Breast epithelium (tissue), 4 donors: ENCODE measurements at regions of chr3 and their contacts with region 1.

Region 1: DNA sequence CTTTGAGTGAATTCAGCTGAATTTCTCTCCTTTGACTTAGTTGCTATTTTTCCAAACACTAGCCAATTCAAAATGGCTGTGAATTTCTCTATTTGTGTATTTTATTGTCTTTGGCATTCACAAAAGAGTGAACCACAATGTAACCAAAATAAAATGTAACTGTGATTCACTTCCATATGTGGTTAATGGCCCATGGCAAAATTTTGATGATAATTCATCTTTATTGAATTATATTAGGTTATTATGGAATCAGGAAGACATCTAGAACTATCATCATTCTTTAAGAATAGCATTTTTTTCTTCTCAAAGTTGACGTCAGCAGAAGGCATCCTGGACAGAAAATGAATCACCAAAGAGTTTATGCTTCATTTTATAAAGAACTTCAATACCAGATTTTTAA is 705.3 kb upstream of the NAALADL2 start:
- DNase-seq: no peak
- H3K4me3 ChIP-seq: no peak overlapping the region
- H3K27ac ChIP-seq: no peak overlapping the region
- H3K4me1 ChIP-seq: no peaks in the 10 kb centered on the region
- H3K27me3 ChIP-seq: no peaks in the 10 kb centered on the region
- CTCF ChIP-seq: no peak
- POLR2A ChIP-seq: no peak

Region 2: GRCh38 chr3:173630849-173631248 is 523.0 kb before region 1 on chr3:
- intact Hi-C with region 1: loop called (anchors 5 kb)
- DNase-seq: no peak
- H3K4me3 ChIP-seq: no peak overlapping the region
- H3K27ac ChIP-seq: no peak overlapping the region
- H3K4me1 ChIP-seq: no peaks in the 10 kb centered on the region
- H3K27me3 ChIP-seq: no peaks in the 10 kb centered on the region
- CTCF ChIP-seq: no peak
- POLR2A ChIP-seq: no peak